ENCODE measurements at regions of chr10 and their contacts with region 1.

Region 1: GRCh38 chr10:100391163-100392002 is 44.4 kb downstream of the SCD start:
- DNase-seq: no peak
- ATAC-seq: no peak
- H3K4me3 ChIP-seq: no peak overlapping the region
- H3K27ac ChIP-seq: no peak overlapping the region
- H3K4me1 ChIP-seq: no peaks in the 10 kb centered on the region
- H3K27me3 ChIP-seq: no peaks in the 10 kb centered on the region
- CTCF ChIP-seq: no peak
- POLR2A ChIP-seq: no peak
- RAD21 ChIP-seq: no peak

Region 2: DNA sequence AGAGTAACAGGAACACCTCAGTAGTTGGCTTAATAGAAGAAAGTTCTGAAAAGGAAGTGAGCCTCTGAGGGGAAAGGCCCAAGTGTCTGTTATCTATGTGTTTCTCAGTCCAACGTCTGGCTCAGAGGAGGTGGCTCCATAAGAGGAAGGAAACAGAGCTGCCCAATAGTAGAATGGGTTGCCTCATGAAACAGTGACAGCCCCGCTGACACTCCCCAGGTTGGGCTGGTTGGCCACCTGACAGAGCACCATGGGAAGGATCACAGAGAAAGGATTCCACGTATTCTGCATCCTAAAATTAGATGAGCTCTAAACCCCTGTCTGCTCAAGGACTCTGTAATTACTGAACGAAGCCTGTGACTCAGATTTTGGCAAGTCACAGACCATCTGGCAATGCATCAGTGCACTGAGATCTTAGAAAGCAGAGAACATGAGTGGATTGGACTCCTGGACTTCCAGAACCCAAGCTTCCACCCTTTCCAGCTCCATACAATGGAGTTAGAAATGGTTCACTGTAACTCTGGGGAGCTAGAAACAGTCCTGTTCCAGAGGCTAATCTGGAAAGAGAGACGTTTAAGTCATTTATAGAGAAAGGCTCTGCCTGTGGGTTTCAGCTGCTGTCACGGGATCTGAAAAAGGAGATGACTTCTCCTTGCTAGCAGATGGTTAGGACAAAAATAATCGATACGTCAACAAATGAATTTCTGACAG is 64.2 kb before region 1 on chr10:
- CTCF ChIA-PET with region 1: no interaction called
- POLR2A ChIA-PET with region 1: no interaction called
- RAD21 ChIA-PET with region 1: no interaction called
- intact Hi-C with region 1: no loop called
- DNase-seq: no peak
- ATAC-seq: no peak
- H3K4me3 ChIP-seq: no peak overlapping the region
- H3K27ac ChIP-seq: no peak overlapping the region
- H3K4me1 ChIP-seq: no peaks in the 10 kb centered on the region
- H3K27me3 ChIP-seq: peaks cover 55% of the 10 kb centered on the region; the same call in 1 of the 2 replicates
- CTCF ChIP-seq: no peak
- POLR2A ChIP-seq: no peak
- RAD21 ChIP-seq: no peak

Region 3: GRCh38 chr10:100373298-100374136 is 17.9 kb before region 1 on chr10:
- CTCF ChIA-PET with region 1: no interaction called
- POLR2A ChIA-PET with region 1: interaction called, 13 read pairs
- RAD21 ChIA-PET with region 1: no interaction called
- intact Hi-C with region 1: no loop called
- DNase-seq: peak; percentile 100
- ATAC-seq: peak; percentile 81
- H3K4me3 ChIP-seq: peak overlapping the region; percentile 60 to 70
- H3K27ac ChIP-seq: peak overlapping the region; percentile 99
- H3K4me1 ChIP-seq: peaks cover 74 to 84% of the 10 kb centered on the region in 2 experiments
- H3K27me3 ChIP-seq: no peaks in the 10 kb centered on the region
- CTCF ChIP-seq: no peak
- POLR2A ChIP-seq: peak; percentile 87
- RAD21 ChIP-seq: no peak

Measured in HCT116 (cell line).